Sciatic nerve (tissue), 2 donors: ENCODE measurements at regions of chr17 and their contacts with region 1.

Region 1: DNA sequence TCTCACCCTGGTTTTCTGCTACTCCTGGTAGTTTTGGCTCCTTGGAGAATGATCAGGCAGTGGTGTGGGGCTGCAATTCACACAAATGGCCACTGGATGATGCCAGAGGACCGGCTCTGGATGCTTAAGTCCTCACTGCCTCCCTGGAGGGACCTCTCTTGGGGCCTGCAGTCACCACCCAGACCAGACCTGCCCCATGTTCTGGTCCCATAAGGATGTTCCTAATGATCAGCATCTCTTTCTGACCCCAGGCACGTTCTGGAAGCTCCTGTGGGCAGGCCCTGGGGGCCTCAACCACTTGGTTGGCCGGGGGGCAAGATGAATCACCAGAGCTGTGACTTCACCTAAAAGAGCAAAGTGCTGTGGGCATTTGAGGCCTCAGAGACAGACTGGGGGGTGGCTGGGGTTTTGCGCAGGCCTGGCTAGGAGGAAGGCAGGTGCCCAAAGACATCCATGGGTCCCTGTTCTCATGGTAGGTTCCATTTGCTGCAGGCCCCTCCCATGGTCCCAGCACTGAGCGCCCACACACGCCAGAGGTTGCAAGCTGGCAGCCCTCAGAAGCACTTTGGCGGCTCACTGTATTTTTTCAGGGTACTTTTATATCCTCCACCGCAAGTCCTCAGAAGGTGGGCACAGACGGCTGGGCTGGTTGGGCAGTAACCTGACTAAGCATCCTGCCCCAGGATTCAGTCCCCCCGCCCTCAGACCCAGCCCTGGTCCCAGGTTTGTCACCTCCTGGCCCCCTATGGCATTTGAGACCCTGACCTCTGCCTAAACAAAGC is 53.2 kb downstream of the NT5M start:
- DNase-seq: peak; percentile 87
- ATAC-seq: peak; percentile 94

Region 2: DNA sequence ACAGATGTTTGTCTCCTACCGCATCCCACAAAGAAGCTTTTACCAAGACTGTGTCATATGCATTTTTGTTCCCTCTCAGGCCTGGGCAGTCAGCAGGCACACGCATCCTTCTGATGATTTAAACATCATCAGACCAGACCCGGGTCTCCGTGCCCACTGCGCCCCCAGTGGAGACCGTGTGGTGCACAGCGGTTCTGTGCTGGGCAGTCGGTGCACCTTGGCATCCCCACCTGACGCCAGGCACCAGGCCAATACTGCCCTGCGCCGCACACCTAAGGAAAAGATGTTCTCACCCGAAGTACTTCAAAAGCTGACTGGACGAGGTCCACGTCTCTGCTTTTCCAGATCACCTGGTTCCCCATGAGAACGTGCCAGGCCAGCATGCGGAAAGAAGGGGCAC is 139.6 kb before region 1 on chr17:
- intact Hi-C with region 1: no loop called
- DNase-seq: peak; percentile 51
- ATAC-seq: no peak

Region 3: DNA sequence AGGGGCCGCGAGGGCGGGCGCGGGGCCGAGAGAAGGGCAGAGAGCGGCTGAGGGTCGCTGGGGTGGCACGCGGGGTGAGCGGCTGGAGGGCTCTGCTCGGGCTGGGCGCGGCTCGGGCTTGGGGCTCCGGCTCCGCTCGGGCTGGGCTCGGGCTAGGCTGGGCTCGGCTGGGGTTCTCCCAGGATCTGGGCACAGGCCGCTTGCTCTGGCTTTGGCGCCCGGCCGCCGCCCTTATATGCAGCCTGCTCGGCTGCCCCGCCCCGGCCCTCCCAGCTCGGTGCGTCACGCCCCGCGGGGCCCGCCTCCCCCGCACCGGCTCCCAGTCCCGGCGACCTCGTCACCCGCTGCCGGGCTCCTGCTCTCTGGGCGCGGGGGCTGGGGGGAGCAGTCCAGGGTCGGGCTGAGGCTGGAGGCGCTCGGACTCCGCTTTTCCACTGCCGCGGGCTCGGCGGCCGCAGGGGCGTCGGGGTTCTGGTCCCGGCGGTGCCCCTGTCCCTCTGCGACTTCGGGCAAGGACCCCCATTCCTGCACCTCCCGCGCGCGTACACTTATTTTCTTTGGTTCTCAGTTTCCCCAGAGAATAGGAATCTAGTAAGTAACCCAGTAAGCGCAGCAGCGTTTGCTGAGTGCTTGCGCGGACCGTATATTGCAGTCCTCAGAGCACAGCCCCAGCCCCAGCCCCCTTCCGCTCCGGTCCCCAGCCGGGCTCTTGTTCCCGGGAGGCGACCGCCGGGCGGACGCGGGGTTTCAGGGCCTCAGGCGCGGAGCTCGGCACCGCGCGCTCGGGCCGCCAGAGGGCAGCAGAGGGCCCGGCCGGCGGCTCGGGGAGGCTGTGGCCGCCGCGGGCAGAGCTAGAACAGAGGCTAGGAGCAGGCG is 140.1 kb after region 1 on chr17 and contains the start of gene RASD1:
- intact Hi-C with region 1: loop called (anchors 5 kb)
- DNase-seq: peak; percentile 96
- ATAC-seq: peak; percentile 92
- total RNA-seq, gene RASD1: 58.6 TPM

Region 4: GRCh38 chr17:17641621-17642409 is 285.5 kb after region 1 on chr17:
- intact Hi-C with region 1: loop called (anchors 2 kb)
- DNase-seq: peak; percentile 88
- ATAC-seq: peak; percentile 89